T-cell (primary cell): ENCODE measurements at regions of chr20 and their contacts with region 1.

Region 1: DNA sequence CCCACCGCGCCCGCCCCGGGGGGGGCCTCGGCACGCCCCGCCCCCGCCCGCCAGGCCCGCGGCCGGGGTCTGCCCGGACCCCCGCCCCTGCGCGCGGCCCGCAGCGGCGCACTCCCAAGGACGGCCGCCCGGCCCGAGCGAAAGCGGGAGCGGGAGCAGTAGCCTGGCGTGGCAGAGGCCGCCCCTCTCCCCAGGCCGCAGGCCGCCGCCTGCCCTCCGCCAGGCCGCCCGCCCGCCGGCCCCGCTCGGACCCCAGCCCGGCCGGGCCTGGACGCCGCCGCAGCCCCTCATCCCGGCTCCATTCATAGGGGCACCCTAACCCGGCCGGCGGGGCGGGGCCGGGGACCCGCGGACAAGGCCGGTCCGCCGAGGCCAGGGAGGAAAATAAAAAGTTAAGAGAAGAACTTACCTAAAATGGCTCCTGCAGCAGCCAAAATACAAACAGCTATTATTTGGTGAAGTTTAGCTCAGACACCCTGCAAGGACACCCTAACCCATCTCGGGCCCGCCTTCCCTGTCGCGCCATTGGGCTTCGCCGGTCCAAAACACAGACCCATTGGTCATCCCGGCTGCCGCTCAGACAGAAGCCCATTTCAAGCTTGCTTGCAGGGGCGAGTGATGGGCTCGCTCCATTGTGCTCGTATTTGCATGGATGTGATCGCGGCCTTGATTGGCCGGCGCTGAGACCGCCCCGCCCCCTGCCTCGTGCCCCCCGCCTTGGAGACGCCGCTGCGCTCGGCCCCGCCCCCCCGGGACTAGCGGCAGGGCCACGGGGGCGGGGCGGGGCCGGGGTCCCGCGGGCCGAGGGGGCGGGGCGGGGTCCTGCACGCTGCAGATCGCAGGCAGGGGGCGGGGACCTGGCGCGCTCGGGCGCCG is at the start of gene CHD6:
- DNase-seq: peak; percentile 97 to 100 (median 99)
- ATAC-seq: peak; percentile 94 to 96 (median 95)
- H3K4me3 ChIP-seq: peak within 1 kb of the TSS; percentile 69 to 91
- H3K4me3 Mint-ChIP-seq: peak within 1 kb of the TSS; percentile 91 to 92 (median 92)
- H3K27ac ChIP-seq: peak within 1 kb of the TSS; percentile 53
- H3K27ac Mint-ChIP-seq: peak within 1 kb of the TSS; percentile 84 to 91
- H3K4me1 ChIP-seq: peaks cover 17 to 20% of the 10 kb centered on the region in 2 experiments
- H3K4me1 Mint-ChIP-seq: peaks cover 48 to 52% (median 50%) of the 10 kb centered on the region in 3 donors
- H3K27me3 ChIP-seq: no peaks in the 10 kb centered on the region
- H3K27me3 Mint-ChIP-seq: no peaks in the 10 kb centered on the region
- total RNA-seq, gene CHD6: 68.4 to 105 (median 74.9) TPM

Region 2: GRCh38 chr20:41592520-41593216 is 25.5 kb before region 1 on chr20:
- CTCF ChIA-PET with region 1: no interaction called
- POLR2A ChIA-PET with region 1: no interaction called
- DNase-seq: no peak
- ATAC-seq: no peak
- H3K4me3 ChIP-seq: no peak overlapping the region
- H3K4me3 Mint-ChIP-seq: peak overlapping the region in 1 of 3 donors; percentile 5
- H3K27ac ChIP-seq: no peak overlapping the region
- H3K27ac Mint-ChIP-seq: no peak overlapping the region
- H3K4me1 ChIP-seq: peaks cover 0 to 3% of the 10 kb centered on the region in 2 experiments
- H3K4me1 Mint-ChIP-seq: peaks cover 37 to 50% (median 39%) of the 10 kb centered on the region in 3 donors
- H3K27me3 ChIP-seq: no peaks in the 10 kb centered on the region
- H3K27me3 Mint-ChIP-seq: no peaks in the 10 kb centered on the region

Region 3: GRCh38 chr20:41693136-41693979 is 75.2 kb after region 1 on chr20:
- CTCF ChIA-PET with region 1: interaction called in 1 of 2 experiments, 15 read pairs
- POLR2A ChIA-PET with region 1: interaction called, 4 read pairs
- DNase-seq: peak; percentile 58 to 92 (median 78)
- ATAC-seq: peak; percentile 81 to 85 (median 84)
- H3K4me3 ChIP-seq: peak overlapping the region; percentile 90 to 97
- H3K4me3 Mint-ChIP-seq: peak overlapping the region; percentile 90 to 95 (median 92)
- H3K27ac ChIP-seq: peak overlapping the region; percentile 93
- H3K27ac Mint-ChIP-seq: peak overlapping the region; percentile 92 to 98
- H3K4me1 ChIP-seq: peaks cover 3 to 15% of the 10 kb centered on the region in 2 experiments
- H3K4me1 Mint-ChIP-seq: peaks cover 14 to 18% (median 15%) of the 10 kb centered on the region in 3 donors
- H3K27me3 ChIP-seq: peaks cover 0 to 4% of the 10 kb centered on the region in 2 experiments
- H3K27me3 Mint-ChIP-seq: peaks cover 4 to 11% of the 10 kb centered on the region in 2 donors

Region 4: DNA sequence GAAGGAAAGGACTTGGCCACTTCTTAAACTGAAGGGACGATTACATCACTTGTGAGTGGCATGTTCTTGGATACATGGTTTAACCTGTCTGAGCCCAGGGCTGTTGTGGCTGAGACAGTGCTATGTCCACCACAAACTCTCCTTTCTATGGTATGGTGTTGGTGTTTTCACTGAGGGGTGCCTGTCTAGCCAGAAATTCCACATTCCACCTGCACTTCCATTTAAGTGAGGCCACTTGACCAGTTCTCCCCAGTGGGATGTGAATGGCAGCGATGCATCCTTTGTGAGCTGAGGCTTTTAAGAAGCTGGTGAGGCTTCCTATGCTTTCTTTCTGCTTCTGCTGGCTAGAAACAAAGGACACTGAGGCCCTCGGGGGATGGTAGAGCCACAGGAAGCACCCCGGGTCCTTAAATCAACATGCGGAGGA is 151.4 kb after region 1 on chr20:
- CTCF ChIA-PET with region 1: no interaction called
- POLR2A ChIA-PET with region 1: no interaction called
- DNase-seq: no peak
- ATAC-seq: no peak
- H3K4me3 ChIP-seq: no peak overlapping the region
- H3K4me3 Mint-ChIP-seq: no peak overlapping the region
- H3K27ac ChIP-seq: no peak overlapping the region
- H3K27ac Mint-ChIP-seq: no peak overlapping the region
- H3K4me1 ChIP-seq: no peaks in the 10 kb centered on the region
- H3K4me1 Mint-ChIP-seq: no peaks in the 10 kb centered on the region
- H3K27me3 ChIP-seq: peaks cover 2 to 8% of the 10 kb centered on the region in 2 experiments
- H3K27me3 Mint-ChIP-seq: peaks cover 0 to 26% of the 10 kb centered on the region in 2 donors